Thyroid gland (tissue), 4 donors: ENCODE measurements at regions of chr3 and their contacts with region 1.

Region 1: DNA sequence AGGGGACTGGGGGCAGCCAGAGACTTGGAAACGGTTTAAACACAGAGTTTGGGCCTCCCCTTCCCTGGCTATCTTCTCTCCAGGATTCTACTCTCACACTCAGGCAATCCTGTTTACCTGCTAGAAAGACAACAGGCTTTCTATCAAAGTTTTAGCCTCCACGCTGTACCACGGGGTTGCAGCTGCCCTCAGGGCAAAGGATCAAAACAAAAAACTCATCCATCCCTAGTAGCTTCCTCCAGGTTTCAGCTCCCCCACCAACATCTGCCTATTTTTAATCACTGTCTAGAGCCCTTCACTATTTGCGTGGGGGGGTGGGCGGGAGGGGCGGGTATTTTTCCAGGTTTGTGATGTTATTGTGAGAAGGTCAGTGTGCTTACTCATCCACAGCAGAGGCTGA is 286.8 kb upstream of the TRIM42 start:
- DNase-seq: no peak
- H3K4me3 ChIP-seq: no peak overlapping the region
- H3K27ac ChIP-seq: no peak overlapping the region
- H3K4me1 ChIP-seq: peaks cover 6 to 7% of the 10 kb centered on the region in 2 donors
- H3K27me3 ChIP-seq: no peaks in the 10 kb centered on the region
- CTCF ChIP-seq: no peak
- POLR2A ChIP-seq: no peak

Region 2: DNA sequence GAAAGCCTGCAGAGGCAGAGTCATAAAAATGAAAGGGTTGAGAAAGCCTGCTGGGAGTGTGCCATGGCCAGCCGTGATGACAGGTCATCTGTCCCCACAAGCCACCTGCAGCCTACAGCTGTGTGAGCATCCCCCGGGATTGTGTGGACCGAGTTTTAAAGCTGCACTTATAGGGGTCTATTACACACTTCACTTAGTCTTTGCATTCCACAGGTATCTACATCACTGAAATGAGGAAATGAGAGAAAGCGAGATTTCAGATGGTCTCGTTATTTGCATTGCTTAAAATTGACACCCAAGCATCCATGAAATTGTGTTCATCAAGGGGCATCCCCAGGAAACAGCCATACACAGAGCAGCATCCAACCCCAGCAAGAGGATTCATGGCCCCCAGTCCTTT is 149.2 kb after region 1 on chr3:
- intact Hi-C with region 1: no loop called
- DNase-seq: no peak
- H3K4me3 ChIP-seq: no peak overlapping the region
- H3K27ac ChIP-seq: no peak overlapping the region
- H3K4me1 ChIP-seq: no peaks in the 10 kb centered on the region
- H3K27me3 ChIP-seq: no peaks in the 10 kb centered on the region
- CTCF ChIP-seq: no peak
- POLR2A ChIP-seq: no peak

Region 3: GRCh38 chr3:140559546-140559945 is 168.5 kb after region 1 on chr3:
- intact Hi-C with region 1: no loop called
- DNase-seq: no peak
- H3K4me3 ChIP-seq: no peak overlapping the region
- H3K27ac ChIP-seq: no peak overlapping the region
- H3K4me1 ChIP-seq: no peaks in the 10 kb centered on the region
- H3K27me3 ChIP-seq: no peaks in the 10 kb centered on the region
- CTCF ChIP-seq: no peak
- POLR2A ChIP-seq: no peak

Region 4: GRCh38 chr3:140602781-140603180 is 211.7 kb after region 1 on chr3:
- intact Hi-C with region 1: loop called (anchors 5 kb)
- DNase-seq: no peak
- H3K4me3 ChIP-seq: no peak overlapping the region
- H3K27ac ChIP-seq: no peak overlapping the region
- H3K4me1 ChIP-seq: peaks cover 2 to 7% of the 10 kb centered on the region in 2 donors
- H3K27me3 ChIP-seq: no peaks in the 10 kb centered on the region
- CTCF ChIP-seq: no peak
- POLR2A ChIP-seq: no peak

Region 5: GRCh38 chr3:140682586-140682985 is 291.5 kb after region 1 on chr3:
- intact Hi-C with region 1: no loop called
- DNase-seq: no peak
- H3K4me3 ChIP-seq: no peak overlapping the region
- H3K27ac ChIP-seq: no peak overlapping the region
- H3K4me1 ChIP-seq: no peaks in the 10 kb centered on the region
- H3K27me3 ChIP-seq: no peaks in the 10 kb centered on the region
- CTCF ChIP-seq: no peak
- POLR2A ChIP-seq: no peak